A549 (cell line): ENCODE measurements at regions of chr1 and their contacts with region 1.

Region 1: DNA sequence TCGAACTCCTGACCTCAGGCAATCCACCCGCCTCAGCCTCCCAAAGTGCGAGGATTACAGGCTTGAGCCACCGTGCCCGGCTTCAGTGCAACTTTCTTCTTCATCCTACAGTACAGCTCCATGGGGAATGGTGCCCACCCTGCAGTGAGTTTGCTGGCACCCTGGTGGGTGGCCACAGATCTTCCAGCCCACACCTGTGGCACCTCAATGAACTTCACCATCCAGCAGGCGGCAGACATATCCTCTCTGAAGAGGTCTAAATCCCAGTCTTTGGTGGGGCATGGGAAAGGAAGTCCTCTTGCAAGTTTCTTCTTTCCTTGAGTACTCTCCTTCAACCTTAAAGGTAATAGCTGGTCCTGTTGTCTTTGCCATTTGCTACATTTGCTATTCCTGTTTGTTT is 18.1 kb upstream of the ZBTB8A start:
- DNase-seq: peak in 1 of 2 experiments; percentile 33
- ATAC-seq: peak; percentile 43 to 53; a peak in 3 of 6 replicates
- H3K4me3 ChIP-seq: peak overlapping the region; percentile 51; the same call in 2 of the 3 replicates
- H3K27ac ChIP-seq: peak overlapping the region; percentile 77 to 88
- H3K4me1 ChIP-seq: no peaks in the 10 kb centered on the region
- CTCF ChIP-seq: no peak
- EP300 ChIP-seq: no peak
- POLR2A ChIP-seq: no peak
- RAD21 ChIP-seq: no peak

Region 2: GRCh38 chr1:32351399-32352238 is 169.5 kb before region 1 on chr1:
- CTCF ChIA-PET with region 1: no interaction called
- POLR2A ChIA-PET with region 1: no interaction called
- DNase-seq: peak; percentile 82 to 92
- ATAC-seq: peak; percentile 84 to 93
- H3K4me3 ChIP-seq: peak overlapping the region; percentile 83
- H3K27ac ChIP-seq: peak overlapping the region; percentile 96 to 98
- H3K4me1 ChIP-seq: peaks cover 7% of the 10 kb centered on the region
- CTCF ChIP-seq: no peak; the same call in 2 of the 3 replicates
- EP300 ChIP-seq: no peak
- POLR2A ChIP-seq: peak; percentile 78
- RAD21 ChIP-seq: no peak; a peak in 1 of 5 replicates

Region 3: GRCh38 chr1:32413507-32414185 is 107.5 kb before region 1 on chr1:
- CTCF ChIA-PET with region 1: no interaction called
- POLR2A ChIA-PET with region 1: interaction called, 11 read pairs
- DNase-seq: peak; percentile 43 to 67
- ATAC-seq: peak; percentile 90 to 96
- H3K4me3 ChIP-seq: no peak overlapping the region
- H3K27ac ChIP-seq: no peak overlapping the region
- H3K4me1 ChIP-seq: no peaks in the 10 kb centered on the region
- CTCF ChIP-seq: peak; percentile 70
- EP300 ChIP-seq: no peak
- POLR2A ChIP-seq: no peak
- RAD21 ChIP-seq: peak; percentile 70 to 80; a peak in 4 of 5 replicates

Region 4: GRCh38 chr1:32426489-32427255 is 94.5 kb before region 1 on chr1:
- CTCF ChIA-PET with region 1: interaction called, 13 read pairs
- POLR2A ChIA-PET with region 1: no interaction called
- DNase-seq: no peak
- ATAC-seq: no peak
- H3K4me3 ChIP-seq: no peak overlapping the region
- H3K27ac ChIP-seq: no peak overlapping the region
- H3K4me1 ChIP-seq: 0 out of 3 replicates have a peak, but pooled peaks cover 3% of the 10 kb centered on the region
- CTCF ChIP-seq: no peak
- EP300 ChIP-seq: no peak
- POLR2A ChIP-seq: no peak
- RAD21 ChIP-seq: no peak

Region 5: DNA sequence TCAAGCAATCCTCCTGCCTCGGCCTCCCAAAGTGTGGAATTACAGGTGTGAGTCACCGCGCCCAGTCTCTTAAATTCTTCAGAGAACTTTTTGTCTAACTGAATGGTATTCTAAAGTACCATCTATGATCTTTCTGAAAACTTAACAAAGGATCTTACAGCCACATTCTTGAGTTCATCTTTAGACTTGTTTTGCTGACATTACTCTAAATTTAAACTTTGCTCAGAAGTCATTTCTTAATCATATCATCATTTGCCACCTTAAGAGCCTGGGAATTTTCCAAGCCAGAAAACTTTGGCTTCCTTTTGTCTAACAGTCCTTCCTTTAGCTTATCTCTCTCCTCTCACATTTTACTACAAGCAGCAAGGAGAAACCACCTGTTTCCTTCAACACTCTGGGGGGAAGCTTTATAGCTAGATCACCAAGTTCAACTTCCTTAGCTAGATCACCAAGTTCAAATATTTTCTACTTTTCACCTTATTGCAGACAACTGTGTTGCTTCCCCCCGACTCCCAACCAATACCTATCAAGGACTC is 12.7 kb after region 1 on chr1:
- CTCF ChIA-PET with region 1: interaction called, 24 read pairs
- POLR2A ChIA-PET with region 1: no interaction called
- DNase-seq: no peak
- ATAC-seq: no peak
- H3K4me3 ChIP-seq: no peak overlapping the region
- H3K27ac ChIP-seq: no peak overlapping the region
- H3K4me1 ChIP-seq: 0 out of 3 replicates have a peak, but pooled peaks cover 4% of the 10 kb centered on the region
- CTCF ChIP-seq: no peak
- EP300 ChIP-seq: no peak
- POLR2A ChIP-seq: no peak
- RAD21 ChIP-seq: no peak

Region 6: DNA sequence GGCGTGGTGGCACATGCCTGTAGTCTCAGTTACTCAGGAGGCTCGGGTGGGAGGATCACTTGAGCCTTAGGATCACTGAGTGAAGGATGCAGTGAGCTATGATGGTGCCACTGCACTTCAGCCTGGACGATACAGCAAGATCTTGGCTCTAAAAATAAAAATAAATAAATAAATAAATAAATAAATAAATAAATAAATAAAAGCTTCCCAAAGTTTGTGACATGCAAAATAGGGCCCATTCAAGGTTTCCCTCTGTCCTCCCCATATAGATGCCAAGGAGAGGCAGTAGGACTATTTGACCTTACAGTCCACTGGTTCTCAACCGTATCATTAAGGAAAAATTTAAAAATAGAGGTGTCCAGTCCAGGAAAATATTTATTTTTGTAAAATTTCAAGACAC is 88.0 kb after region 1 on chr1:
- CTCF ChIA-PET with region 1: interaction called, 10 read pairs
- POLR2A ChIA-PET with region 1: no interaction called
- DNase-seq: no peak
- ATAC-seq: no peak
- H3K4me3 ChIP-seq: no peak overlapping the region
- H3K27ac ChIP-seq: no peak overlapping the region
- H3K4me1 ChIP-seq: 0 out of 3 replicates have a peak, but pooled peaks cover 4% of the 10 kb centered on the region
- CTCF ChIP-seq: no peak
- EP300 ChIP-seq: no peak
- POLR2A ChIP-seq: no peak
- RAD21 ChIP-seq: no peak

Region 7: GRCh38 chr1:32870615-32871363 is 349.6 kb after region 1 on chr1 and contains the start of gene FNDC5:
- CTCF ChIA-PET with region 1: interaction called, 12 read pairs
- POLR2A ChIA-PET with region 1: no interaction called
- DNase-seq: no peak
- ATAC-seq: peak; percentile 39 to 66
- H3K4me3 ChIP-seq: peak within 1 kb of the TSS; percentile 58
- H3K27ac ChIP-seq: peak within 1 kb of the TSS; percentile 52 to 84; a peak in 4 of 6 replicates
- H3K4me1 ChIP-seq: 0 out of 3 replicates have a peak, but pooled peaks cover 2% of the 10 kb centered on the region
- CTCF ChIP-seq: no peak
- EP300 ChIP-seq: no peak
- POLR2A ChIP-seq: no peak
- RAD21 ChIP-seq: no peak
- polyA plus RNA-seq, gene FNDC5: 0.26 and 0.78 TPM in 2 replicates